CD8-positive, alpha-beta T cell (primary cell): ENCODE measurements at regions of chr4 and their contacts with region 1.

Region 1: DNA sequence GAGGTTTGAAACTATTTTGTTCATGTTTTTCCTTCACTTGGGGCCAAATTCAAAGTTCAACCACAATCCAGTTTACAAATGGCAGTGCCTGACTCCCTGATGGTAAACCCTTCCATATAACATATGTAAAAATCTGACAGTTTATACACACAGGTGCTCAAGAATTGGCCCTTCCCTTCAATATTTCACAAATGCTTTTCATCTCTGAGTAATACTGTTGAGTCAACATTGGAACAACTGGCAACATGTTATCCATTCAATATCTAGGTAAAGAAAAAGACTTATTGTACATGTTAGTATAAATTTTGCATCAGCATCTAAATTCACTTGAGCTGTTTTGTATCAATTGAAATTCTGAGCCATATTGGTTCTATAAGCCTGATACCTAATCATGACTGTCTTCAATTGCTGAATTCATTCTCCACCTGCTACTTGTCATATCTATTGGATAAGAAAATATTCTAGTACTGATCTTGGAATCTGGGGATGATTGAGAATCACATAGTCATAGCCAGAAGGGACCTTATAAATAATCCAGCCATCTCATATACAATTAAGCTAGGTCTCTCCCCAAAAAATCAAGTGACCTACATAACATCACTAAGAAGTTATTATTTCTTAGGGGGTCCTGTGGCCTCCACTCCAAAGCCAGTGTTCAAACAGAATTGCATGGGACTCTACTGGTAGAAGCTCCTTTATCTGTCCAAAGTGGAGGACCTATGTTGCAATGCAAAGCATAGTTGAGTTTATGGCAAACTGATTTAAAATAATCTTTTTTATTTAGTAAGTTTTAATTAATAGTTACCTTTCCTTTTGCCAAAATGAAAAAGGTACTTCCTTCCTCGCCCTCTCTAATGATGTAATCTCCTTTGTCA is 61.9 kb downstream of the PRKG2 start:
- DNase-seq: no peak
- ATAC-seq: no peak
- H3K4me3 ChIP-seq: peak overlapping the region in 1 of 2 experiments; percentile 42
- H3K4me3 Mint-ChIP-seq: peak overlapping the region; percentile 85
- H3K27ac ChIP-seq: no peak overlapping the region
- H3K27ac Mint-ChIP-seq: peak overlapping the region; percentile 92
- H3K4me1 ChIP-seq: no peaks in the 10 kb centered on the region
- H3K4me1 Mint-ChIP-seq: peaks cover 3% of the 10 kb centered on the region
- H3K27me3 ChIP-seq: no peaks in the 10 kb centered on the region
- H3K27me3 Mint-ChIP-seq: no peaks in the 10 kb centered on the region
- CTCF ChIP-seq: no peak

Region 2: DNA sequence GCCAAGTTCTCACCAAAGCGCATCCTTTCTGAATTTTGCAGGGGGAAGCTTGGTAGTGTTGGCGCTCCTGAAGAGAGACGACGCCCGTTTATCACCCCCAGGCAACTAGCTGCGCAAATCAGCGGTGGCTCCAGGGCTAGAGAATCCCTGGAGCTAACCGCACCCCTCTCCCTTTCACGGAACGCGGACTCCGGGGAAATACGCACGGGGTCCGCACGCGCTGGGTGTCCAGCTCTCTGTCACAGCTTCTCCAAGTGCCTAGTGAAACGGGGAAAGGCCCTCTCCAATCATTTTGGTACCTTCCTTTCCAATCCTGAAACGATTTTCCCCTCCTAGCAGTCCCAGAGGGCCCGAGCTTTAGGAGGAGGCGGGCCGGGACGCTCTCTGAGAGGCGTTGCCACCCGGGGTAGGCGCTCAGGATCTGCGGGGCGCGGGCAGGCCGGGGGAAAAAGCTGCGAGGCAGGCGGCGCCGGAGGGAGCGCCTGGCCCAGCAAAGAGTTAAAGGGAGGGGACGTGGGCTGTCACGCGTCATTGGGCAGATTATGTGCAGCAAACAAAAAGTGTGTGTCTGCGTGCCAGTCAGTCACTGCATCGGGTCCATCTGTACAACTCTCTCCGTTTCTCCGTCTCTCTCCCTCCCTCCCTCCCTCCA is 956.0 kb before region 1 on chr4 and contains the start of gene PRDM8:
- CTCF ChIA-PET with region 1: no interaction called
- POLR2A ChIA-PET with region 1: no interaction called
- intact Hi-C with region 1: loop called in 1 of 2 experiments (anchors 10 kb)
- DNase-seq: peak in 4 of 9 experiments; percentile 37 to 65 (median 50)
- ATAC-seq: peak; percentile 57
- H3K4me3 ChIP-seq: peak within 1 kb of the TSS; percentile 24 to 26
- H3K4me3 Mint-ChIP-seq: peak within 1 kb of the TSS; percentile 64
- H3K27ac ChIP-seq: no peak within 1 kb of the TSS
- H3K27ac Mint-ChIP-seq: no peak within 1 kb of the TSS
- H3K4me1 ChIP-seq: peaks cover 30% of the 10 kb centered on the region
- H3K4me1 Mint-ChIP-seq: peaks cover 33% of the 10 kb centered on the region
- H3K27me3 ChIP-seq: peaks cover 11 to 20% of the 10 kb centered on the region in 2 experiments
- H3K27me3 Mint-ChIP-seq: peaks cover 37% of the 10 kb centered on the region
- CTCF ChIP-seq: no peak
- total RNA-seq, gene PRDM8: 5.2 to 6.0 TPM

Region 3: GRCh38 chr4:81538716-81539427 is 385.8 kb after region 1 on chr4:
- CTCF ChIA-PET with region 1: no interaction called
- POLR2A ChIA-PET with region 1: no interaction called
- intact Hi-C with region 1: no loop called
- DNase-seq: no peak
- ATAC-seq: no peak
- H3K4me3 ChIP-seq: no peak overlapping the region
- H3K4me3 Mint-ChIP-seq: no peak overlapping the region
- H3K27ac ChIP-seq: no peak overlapping the region
- H3K27ac Mint-ChIP-seq: no peak overlapping the region
- H3K4me1 ChIP-seq: no peaks in the 10 kb centered on the region
- H3K4me1 Mint-ChIP-seq: no peaks in the 10 kb centered on the region
- H3K27me3 ChIP-seq: no peaks in the 10 kb centered on the region
- H3K27me3 Mint-ChIP-seq: no peaks in the 10 kb centered on the region
- CTCF ChIP-seq: no peak